ENCODE measurements at regions of chr7 and their contacts with region 1.

Region 1: GRCh38 chr7:44082541-44083207 is 344 bp upstream of the POLM start:
- DNase-seq: peak; percentile 98 to 99
- H3K4me3 ChIP-seq: peak overlapping the region; percentile 82 to 84
- H3K27ac ChIP-seq: peak overlapping the region; percentile 89
- H3K4me1 ChIP-seq: peaks cover 61% of the 10 kb centered on the region
- H3K27me3 ChIP-seq: no peaks in the 10 kb centered on the region
- CTCF ChIP-seq: no peak
- POLR2A ChIP-seq: peak in 1 of 2 donors; percentile 83

Region 2: DNA sequence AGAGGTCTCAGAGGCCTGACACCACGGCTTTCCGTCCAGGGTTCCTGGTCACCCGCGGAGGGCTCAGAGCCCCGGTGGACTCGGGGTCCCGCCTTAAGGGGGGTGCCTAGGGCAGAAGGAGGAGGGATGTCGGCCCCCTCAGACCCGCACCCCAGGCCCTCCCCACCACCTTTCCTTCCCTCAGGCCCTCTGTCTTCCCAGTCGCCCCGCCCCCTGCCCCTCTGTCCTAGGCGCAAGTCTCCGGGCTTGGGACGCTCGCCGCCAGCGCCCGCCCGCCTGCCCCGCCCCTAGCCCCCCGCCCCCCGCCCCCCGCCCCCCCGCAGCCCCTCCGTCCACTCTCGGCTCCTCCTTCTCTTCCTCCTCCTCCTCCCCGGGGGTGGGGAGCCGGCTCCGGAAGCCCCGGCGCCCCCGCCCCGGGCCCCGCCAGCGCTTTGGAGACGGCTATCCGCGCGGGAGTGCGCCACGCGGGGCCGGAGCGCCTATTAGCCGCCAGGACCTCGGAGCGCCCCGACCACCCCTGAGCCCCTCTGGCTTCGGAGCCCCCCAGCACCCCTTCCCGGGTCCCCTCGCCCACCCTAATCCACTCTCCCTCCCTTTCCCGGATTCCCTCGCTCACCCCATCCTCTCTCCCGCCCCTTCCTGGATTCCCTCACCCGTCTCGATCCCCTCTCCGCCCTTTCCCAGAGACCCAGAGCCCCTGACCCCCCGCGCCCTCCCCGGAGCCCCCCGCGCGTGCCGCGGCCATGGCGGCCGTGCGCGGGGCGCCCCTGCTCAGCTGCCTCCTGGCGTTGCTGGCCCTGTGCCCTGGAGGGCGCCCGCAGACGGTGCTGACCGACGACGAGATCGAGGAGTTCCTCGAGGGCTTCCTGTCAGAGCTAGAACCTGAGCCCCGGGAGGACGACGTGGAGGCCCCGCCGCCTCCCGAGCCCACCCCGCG is 21.5 kb after region 1 on chr7 and contains the start of gene AEBP1:
- intact Hi-C with region 1: loop called (anchors 2 kb)
- DNase-seq: no peak
- H3K4me3 ChIP-seq: peak within 1 kb of the TSS; percentile 56 to 72
- H3K27ac ChIP-seq: peak within 1 kb of the TSS; percentile 98
- H3K4me1 ChIP-seq: peaks cover 66% of the 10 kb centered on the region
- H3K27me3 ChIP-seq: no peaks in the 10 kb centered on the region
- CTCF ChIP-seq: no peak
- POLR2A ChIP-seq: peak in 1 of 2 donors; percentile 44
- total RNA-seq, gene AEBP1: 321 TPM

Region 3: GRCh38 chr7:44114586-44115310 is 32.1 kb after region 1 on chr7:
- intact Hi-C with region 1: loop called (anchors 5 kb)
- DNase-seq: no peak
- H3K4me3 ChIP-seq: no peak overlapping the region
- H3K27ac ChIP-seq: no peak overlapping the region
- H3K4me1 ChIP-seq: peaks cover 2% of the 10 kb centered on the region
- H3K27me3 ChIP-seq: no peaks in the 10 kb centered on the region
- CTCF ChIP-seq: no peak
- POLR2A ChIP-seq: no peak